Dorsolateral prefrontal cortex (tissue), 120 donors: ENCODE measurements at regions of chr14 and their contacts with region 1.

Region 1: DNA sequence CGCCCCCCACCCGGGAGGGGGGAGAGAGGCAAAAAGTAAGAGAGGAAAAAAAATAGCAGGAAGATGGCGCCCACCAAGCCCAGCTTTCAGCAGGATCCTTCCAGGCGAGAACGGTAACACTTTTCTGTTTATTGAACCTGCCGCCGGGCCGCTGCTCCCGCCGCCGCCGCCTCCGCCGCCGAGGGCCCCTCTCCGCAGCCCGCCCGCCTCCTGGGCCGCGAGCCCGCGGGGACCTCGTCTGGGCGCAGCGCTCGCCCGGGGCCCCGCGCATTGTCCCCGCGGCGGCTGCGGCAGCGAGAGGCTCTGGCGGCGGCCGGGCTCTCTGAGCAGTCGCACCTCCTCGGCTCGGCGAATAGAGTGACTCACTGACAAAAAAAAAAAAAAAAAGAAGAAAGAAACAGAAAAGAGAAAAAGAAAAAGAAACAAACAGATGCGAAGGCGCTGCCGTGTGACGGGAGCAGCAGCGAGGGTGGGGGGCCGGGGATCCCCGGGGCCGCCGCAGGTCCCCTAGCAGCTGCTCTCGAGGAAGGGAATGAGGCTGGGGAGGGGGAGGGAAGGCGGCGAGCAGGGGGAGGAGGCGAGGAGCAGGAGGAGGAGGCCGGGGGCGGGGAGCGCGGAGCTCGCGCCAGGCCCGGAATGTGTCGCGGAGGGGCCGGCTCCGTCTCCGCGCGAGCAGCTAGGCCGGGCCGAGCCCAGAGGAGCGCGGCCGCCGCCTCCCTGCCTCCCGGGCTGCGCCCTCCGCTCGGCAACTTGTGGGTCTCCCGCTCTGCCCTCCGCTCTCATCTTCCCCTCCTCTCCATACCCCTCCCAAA is 781 bp downstream of the NPAS3 start:
- DNase-seq: peak; percentile 38 to 86 (median 72)
- H3K4me3 ChIP-seq: peak overlapping the region; percentile 24 to 79 (median 68)
- H3K27ac ChIP-seq: peak overlapping the region; percentile 70 to 98 (median 93)
- H3K27me3 ChIP-seq: peaks cover 0 to 4% (median 0%) of the 10 kb centered on the region in 45 donors
- CTCF ChIP-seq: peak in 6 of 56 donors; percentile 10 to 28 (median 18)

Region 2: DNA sequence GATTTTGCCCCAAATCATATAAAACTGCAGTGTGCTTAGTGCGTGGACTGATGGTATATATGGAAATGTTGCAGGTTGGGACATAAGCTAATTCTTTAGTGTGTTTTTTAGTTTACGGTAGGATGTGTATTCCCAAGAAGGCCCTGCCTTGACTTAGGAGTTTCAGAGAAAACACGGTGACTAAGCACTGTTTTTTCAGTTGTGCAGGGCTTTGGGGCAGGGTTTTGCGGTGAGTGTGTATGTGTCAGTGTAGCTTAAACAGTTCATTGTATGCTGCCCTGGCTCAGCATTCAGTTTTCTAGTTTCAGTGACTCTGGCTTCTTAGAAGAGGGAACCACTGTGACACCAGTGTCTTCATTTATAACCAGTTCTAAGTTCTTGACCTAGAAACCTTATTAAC is 509.1 kb before region 1 on chr14:
- intact Hi-C with region 1: no loop called
- DNase-seq: peak in 2 of 10 donors; percentile 51 to 54
- H3K4me3 ChIP-seq: no peak overlapping the region
- H3K27ac ChIP-seq: peak overlapping the region in 53 of 59 donors; percentile 2 to 97 (median 69)
- H3K27me3 ChIP-seq: no peaks in the 10 kb centered on the region
- CTCF ChIP-seq: peak in 1 of 56 donors; percentile 13

Region 3: GRCh38 chr14:32576088-32576795 is 363.2 kb before region 1 on chr14:
- intact Hi-C with region 1: loop called (anchors 5 kb)
- DNase-seq: peak in 9 of 10 donors; percentile 31 to 72 (median 52)
- H3K4me3 ChIP-seq: peak overlapping the region in 36 of 59 donors; percentile 3 to 56 (median 32)
- H3K27ac ChIP-seq: peak overlapping the region in 48 of 59 donors; percentile 1 to 84 (median 60)
- H3K27me3 ChIP-seq: no peaks in the 10 kb centered on the region
- CTCF ChIP-seq: peak; percentile 91 to 99 (median 97)

Region 4: DNA sequence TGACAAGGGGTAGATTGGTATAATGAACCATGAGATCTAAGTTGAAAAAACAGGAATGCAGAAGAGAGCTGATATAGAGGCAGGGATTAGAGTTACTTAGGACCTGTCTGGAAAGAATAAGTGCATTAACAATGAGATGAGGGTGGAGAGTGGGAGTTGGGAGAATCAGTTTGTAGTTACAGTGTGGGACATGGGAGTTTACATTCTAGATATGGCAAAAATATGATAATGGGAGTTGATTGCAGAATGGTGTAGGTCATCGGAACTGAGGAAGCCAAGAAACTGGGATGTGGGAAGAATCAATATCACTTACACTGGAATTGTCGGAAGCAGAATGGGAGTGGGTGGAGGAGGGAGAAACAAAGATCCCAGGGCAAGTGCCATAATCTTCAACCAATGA is 301.9 kb before region 1 on chr14:
- intact Hi-C with region 1: no loop called
- DNase-seq: no peak
- H3K4me3 ChIP-seq: no peak overlapping the region
- H3K27ac ChIP-seq: no peak overlapping the region
- H3K27me3 ChIP-seq: no peaks in the 10 kb centered on the region
- CTCF ChIP-seq: no peak

Region 5: DNA sequence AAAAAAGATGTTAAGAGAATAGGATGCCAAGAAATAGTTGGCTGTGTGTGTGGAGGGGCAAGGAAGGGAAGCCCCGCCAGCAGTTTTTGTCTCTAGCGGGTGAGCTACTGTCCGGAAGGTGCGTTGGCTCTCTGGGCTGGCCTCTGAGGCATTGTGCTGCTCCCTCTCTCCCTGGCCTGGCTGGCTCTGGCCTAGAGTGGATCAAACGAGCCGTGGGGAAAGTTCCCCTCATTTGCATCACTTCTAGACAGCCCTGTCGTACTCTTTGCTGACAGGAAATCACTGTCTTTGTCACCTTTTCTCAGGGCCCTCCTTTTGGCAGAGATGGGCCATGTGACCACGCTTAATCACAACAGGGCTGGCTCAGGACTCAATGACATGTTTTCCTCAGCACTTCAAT is 236.9 kb before region 1 on chr14:
- intact Hi-C with region 1: no loop called
- DNase-seq: peak in 7 of 10 donors; percentile 32 to 67 (median 55)
- H3K4me3 ChIP-seq: peak overlapping the region in 18 of 59 donors; percentile 3 to 35 (median 22)
- H3K27ac ChIP-seq: peak overlapping the region; percentile 42 to 91 (median 83)
- H3K27me3 ChIP-seq: no peaks in the 10 kb centered on the region
- CTCF ChIP-seq: no peak

Region 6: DNA sequence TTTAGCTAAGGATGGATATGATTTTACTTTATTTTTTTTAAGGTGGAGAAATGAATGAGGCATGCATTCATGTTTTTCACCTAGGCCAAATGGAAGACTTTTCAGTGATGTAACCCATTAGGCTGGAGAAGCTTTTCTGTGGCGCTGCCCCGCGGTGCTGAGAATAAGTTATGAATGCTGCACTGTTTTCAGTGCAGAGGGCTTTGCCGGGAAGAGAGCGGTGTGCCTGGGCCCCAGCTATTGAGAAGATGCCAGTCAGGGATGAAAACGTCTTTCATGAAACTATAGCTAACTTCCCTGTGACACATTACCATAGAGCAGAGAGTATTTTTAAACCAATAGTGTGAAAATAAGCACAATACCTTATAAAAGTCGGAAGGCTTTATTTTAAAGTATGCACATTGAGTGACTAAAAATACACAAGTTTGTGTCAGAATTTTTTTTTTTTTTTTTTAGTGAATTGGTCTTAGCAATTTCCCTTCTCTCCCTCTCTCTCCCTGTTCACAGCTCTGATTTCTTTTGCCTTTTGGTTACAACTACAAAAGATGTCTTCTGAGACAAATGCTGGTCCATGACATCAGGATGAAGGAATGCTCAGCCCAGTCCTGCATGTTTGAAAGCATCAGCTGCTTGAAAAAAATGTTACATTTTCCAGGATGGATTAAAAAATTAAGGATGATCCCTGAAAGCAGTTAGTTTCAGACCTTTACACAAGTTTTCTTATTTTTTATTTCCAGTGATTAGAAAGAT is 47.5 kb after region 1 on chr14:
- intact Hi-C with region 1: loop called (anchors 2 kb)
- DNase-seq: peak; percentile 8 to 89 (median 80)
- H3K4me3 ChIP-seq: peak overlapping the region in 23 of 59 donors; percentile 4 to 45 (median 21)
- H3K27ac ChIP-seq: peak overlapping the region; percentile 31 to 98 (median 92)
- H3K27me3 ChIP-seq: no peaks in the 10 kb centered on the region
- CTCF ChIP-seq: peak in 21 of 56 donors; percentile 6 to 51 (median 23)

Region 7: DNA sequence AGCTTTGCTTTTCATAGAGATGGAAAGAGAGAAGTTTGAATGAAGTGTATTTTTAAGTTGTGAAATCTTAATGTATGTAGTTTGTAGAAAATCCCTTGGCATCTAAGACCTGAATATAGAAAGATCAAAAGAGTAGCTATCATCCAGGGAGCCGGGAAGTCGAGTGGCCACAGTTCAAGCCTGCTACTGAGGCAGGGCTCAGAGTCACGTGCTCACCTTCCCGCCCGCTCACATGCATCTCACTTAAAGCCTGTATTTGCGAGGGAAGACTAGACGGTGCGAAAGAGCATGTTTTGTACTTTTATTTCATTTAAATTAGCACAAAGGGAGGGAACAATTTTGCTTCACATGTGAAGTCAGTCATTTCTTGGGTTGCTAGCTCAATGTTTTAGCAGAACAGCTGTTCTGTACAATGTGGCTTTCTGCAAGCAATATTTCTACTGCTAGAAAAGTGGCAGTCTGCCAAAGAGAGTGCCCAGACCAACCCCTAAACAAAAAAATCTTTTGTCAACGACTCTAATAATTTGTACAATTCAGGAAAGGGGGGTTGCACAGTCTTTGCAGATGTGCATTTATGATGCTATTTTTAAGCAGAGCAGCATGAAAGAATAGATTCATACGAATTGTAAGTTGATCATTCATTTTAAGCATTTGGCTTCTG is 289.9 kb after region 1 on chr14:
- intact Hi-C with region 1: loop called in 1 of 2 experiments (anchors 5 kb)
- DNase-seq: peak in 9 of 10 donors; percentile 3 to 70 (median 44)
- H3K4me3 ChIP-seq: peak overlapping the region in 47 of 59 donors; percentile 1 to 55 (median 26)
- H3K27ac ChIP-seq: peak overlapping the region in 41 of 59 donors; percentile 1 to 78 (median 40)
- H3K27me3 ChIP-seq: no peaks in the 10 kb centered on the region
- CTCF ChIP-seq: peak in 6 of 56 donors; percentile 12 to 38 (median 19)

Region 8: GRCh38 chr14:33792720-33793368 is 853.4 kb after region 1 on chr14:
- intact Hi-C with region 1: loop called (anchors 10 kb)
- DNase-seq: peak; percentile 76 to 91 (median 84)
- H3K4me3 ChIP-seq: peak overlapping the region; percentile 14 to 65 (median 44)
- H3K27ac ChIP-seq: peak overlapping the region in 56 of 59 donors; percentile 2 to 89 (median 73)
- H3K27me3 ChIP-seq: no peaks in the 10 kb centered on the region
- CTCF ChIP-seq: peak; percentile 85 to 98 (median 96)